ENCODE measurements at regions of chr3 and their contacts with region 1.

Region 1: GRCh38 chr3:31768479-31769123 is 212.5 kb downstream of the OSBPL10 start:
- DNase-seq: no peak
- ATAC-seq: no peak
- H3K4me3 Mint-ChIP-seq: no peak overlapping the region
- H3K27ac Mint-ChIP-seq: peak overlapping the region; percentile 37
- H3K4me1 Mint-ChIP-seq: peaks cover 68% of the 10 kb centered on the region
- H3K27me3 Mint-ChIP-seq: no peaks in the 10 kb centered on the region
- CTCF ChIP-seq: no peak

Region 2: DNA sequence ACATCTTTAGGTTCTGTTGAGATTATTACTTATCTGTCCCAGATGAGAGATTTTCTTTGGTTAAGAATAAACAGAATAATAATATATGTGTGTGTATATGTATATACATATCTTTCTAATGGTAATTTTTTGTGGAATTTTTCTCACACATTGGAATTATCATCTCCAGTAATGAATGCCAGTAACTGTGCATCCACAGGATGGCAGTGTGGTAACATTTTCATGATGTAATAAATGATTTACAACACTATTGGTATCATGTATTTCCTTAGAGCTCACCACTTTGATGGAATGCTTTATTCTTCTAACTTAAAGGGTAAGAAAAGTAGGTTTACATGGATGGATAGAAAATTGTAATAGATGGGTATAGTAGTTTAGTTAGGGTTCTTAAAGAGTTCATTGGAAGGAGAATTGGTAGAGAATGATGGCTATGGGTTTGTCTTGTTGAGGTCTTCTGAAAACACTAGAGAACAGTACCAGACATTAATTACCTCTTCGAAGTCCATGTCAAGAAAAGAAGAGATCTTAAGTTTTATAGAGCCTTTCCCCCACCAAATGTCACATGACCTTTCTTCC is 157.8 kb before region 1 on chr3:
- CTCF ChIA-PET with region 1: interaction called, 4 read pairs
- POLR2A ChIA-PET with region 1: no interaction called
- intact Hi-C with region 1: loop called (anchors 1 kb)
- DNase-seq: no peak
- ATAC-seq: no peak
- H3K4me3 Mint-ChIP-seq: no peak overlapping the region
- H3K27ac Mint-ChIP-seq: no peak overlapping the region
- H3K4me1 Mint-ChIP-seq: peaks cover 17% of the 10 kb centered on the region
- H3K27me3 Mint-ChIP-seq: no peaks in the 10 kb centered on the region
- CTCF ChIP-seq: peak; percentile 31

Measured in activated B cell treated with CpG ODN at 0.5 μM for 24 hours (primary cell).